BJ (cell line): ENCODE measurements at regions of chr21 and their contacts with region 1.

Region 1: GRCh38 chr21:41816220-41817165 is 49.6 kb upstream of the RIPK4 start:
- DNase-seq: no peak
- H3K4me3 ChIP-seq: no peak overlapping the region
- H3K27me3 ChIP-seq: no peaks in the 10 kb centered on the region
- CTCF ChIP-seq: peak; percentile 95

Region 2: DNA sequence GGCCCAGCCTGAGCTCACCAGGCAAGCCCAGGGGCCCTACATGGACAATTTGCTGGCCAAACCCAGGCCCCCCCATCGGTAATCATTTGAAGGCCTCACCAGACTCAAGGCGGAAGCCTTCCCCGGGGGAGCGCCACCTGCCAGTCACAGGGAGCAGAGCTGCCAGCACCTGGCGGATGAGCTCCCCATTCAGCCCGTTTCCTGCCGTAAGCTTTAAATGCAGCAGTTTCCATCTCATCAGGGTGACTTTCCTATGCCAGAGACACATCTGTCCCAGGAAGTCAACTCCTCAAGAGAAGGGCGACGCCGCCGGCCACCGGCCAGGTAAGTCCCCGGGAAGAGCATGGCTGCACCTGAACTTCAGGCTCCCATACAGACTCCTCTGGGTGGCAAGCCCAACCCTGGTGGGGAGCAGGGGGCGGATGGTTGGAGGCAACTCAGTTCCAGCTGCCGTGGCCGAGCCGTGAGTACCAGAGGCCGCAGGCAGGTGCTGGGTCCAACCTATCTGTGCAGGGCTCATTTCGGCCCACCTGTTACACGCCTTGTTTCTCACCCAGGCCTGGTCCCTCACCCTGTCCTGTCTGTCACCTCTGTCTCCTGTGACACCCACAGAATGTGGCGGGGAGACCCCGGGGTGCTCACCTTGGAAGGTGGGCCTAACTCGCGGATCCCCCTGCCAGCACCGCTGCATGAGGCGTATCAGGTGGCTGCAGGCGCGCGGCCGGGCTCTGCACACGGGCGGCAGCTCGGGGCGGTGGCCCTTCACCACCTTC is 70.3 kb before region 1 on chr21:
- CTCF ChIA-PET with region 1: no interaction called
- POLR2A ChIA-PET with region 1: no interaction called
- DNase-seq: no peak
- H3K4me3 ChIP-seq: no peak overlapping the region
- H3K27me3 ChIP-seq: no peaks in the 10 kb centered on the region
- CTCF ChIP-seq: no peak

Region 3: DNA sequence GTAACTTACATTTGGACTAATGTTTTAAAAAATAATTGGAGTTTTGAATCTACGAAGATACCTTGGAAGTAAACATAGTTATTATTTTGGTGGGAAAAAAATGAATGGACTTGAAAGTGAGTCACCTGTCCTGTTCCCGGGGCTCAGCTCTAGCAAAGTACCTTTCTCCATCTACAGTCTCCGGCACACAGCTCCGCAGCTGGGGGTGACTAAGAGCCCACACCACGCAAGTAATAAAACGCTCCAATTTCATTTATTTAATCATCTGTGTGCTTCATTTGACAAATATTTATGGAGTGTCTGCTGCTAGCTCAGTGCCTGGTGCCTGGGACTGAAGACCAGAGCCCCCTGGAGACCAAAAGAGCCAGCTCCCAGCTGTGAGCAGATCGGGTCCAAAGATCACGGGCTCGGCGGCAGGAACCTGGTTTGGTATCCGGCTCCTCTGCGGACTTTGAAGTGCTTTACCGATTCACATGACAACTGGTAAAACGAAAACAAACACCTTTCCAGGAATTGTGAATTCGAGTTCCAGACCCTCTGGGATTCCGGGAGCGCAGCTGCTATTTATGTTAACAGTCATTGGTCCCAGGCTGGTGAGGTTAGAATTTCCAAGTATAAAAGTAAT is 47.9 kb before region 1 on chr21:
- CTCF ChIA-PET with region 1: interaction called, 10 read pairs
- POLR2A ChIA-PET with region 1: no interaction called
- DNase-seq: peak; percentile 78
- H3K4me3 ChIP-seq: peak overlapping the region; percentile 17
- H3K27me3 ChIP-seq: peaks cover 13% of the 10 kb centered on the region
- CTCF ChIP-seq: peak; percentile 69

Region 4: DNA sequence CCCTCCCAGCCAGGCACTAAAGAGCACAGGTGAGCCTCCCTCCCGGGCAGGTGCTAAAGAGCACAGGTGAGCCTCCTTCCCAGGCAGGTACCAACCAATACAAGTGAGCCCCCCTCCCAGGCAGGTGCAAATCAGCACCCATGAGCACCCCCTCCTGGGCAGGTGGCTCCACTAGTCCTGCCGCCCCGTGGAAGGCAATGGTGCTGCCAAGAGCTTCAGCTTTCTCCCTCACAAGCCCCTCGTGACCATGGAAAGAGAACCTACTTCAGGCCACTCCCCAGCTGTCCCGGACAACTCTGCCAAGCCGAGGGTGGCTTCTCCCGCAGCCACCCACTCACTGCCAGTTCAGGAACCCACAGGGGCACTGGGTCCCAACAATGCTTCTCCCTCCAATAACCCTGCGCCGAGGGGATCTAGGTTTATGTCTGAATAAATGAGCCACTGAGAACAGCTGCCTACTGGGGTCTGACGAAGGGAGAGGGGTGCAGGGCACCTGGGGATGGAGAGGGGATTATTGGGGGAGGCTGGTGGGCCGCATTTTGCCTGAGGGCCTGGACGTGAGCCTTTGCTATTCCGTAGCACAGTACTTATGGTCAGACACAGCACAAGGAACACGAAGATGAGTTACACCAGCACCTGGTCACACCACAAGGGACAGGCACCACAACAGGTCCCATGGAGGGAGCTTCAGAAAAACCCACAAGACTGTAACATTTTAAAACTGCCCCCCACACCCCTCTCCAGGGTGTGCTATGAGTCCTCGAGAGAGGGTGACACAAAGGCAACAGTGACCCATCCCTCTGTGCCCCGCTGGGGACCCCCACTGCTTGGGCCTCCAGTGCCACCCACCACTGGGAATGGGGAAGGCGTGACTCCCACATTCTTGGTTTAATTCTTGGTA is 16.4 kb after region 1 on chr21:
- CTCF ChIA-PET with region 1: interaction called, 17 read pairs
- POLR2A ChIA-PET with region 1: no interaction called
- DNase-seq: no peak
- H3K4me3 ChIP-seq: no peak overlapping the region
- H3K27me3 ChIP-seq: no peaks in the 10 kb centered on the region
- CTCF ChIP-seq: no peak